PC-9 (cell line): ENCODE measurements at regions of chr18 and their contacts with region 1.

Region 1: DNA sequence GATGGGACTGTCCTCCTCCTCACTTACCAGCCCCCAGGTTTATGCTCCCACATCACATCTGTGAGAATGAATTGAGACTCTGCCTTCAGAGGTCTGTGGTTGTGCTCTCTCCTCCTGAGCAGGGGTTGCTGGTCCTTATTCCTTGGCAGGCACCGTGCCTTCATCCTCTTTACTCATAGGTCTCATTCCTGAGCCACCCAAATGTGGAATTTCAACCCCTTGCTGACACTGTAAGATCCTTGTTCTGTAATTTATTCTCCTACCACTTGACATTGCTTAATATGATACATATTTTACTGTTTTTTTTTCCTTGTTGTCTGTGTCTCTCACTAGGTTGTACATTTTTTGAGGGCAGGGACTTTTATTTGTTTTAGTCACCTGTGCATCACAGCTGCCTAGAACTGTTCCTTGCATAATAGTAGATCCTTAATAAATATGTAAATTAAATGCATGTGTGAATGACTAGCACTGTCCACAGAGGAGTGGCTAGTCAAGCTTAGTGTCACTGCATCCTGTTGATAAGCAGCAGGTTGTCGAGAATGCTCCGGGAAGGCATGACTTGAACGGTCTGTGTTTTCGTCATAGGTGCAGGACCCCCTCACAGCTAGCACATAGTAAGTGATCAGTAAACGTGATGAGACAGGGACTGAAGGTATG is 180.6 kb downstream of the ZNF407 start:
- DNase-seq: peak in 1 of 2 experiments; percentile 43
- H3K4me3 ChIP-seq: no peak overlapping the region
- H3K27ac ChIP-seq: no peak overlapping the region
- H3K4me1 ChIP-seq: no peaks in the 10 kb centered on the region
- H3K27me3 ChIP-seq: no peaks in the 10 kb centered on the region
- CTCF ChIP-seq: no peak

Region 2: GRCh38 chr18:74679006-74679678 is 99.2 kb before region 1 on chr18:
- CTCF ChIA-PET with region 1: no interaction called
- POLR2A ChIA-PET with region 1: no interaction called
- intact Hi-C with region 1: no loop called
- DNase-seq: no peak
- H3K4me3 ChIP-seq: no peak overlapping the region
- H3K27ac ChIP-seq: no peak overlapping the region
- H3K4me1 ChIP-seq: no peaks in the 10 kb centered on the region
- H3K27me3 ChIP-seq: no peaks in the 10 kb centered on the region
- CTCF ChIP-seq: no peak

Region 3: GRCh38 chr18:74702950-74703349 is 75.4 kb before region 1 on chr18:
- CTCF ChIA-PET with region 1: no interaction called
- POLR2A ChIA-PET with region 1: interaction called, 15 read pairs
- intact Hi-C with region 1: no loop called
- DNase-seq: no peak
- H3K4me3 ChIP-seq: no peak overlapping the region
- H3K27ac ChIP-seq: no peak overlapping the region
- H3K4me1 ChIP-seq: no peaks in the 10 kb centered on the region
- H3K27me3 ChIP-seq: no peaks in the 10 kb centered on the region
- CTCF ChIP-seq: no peak